ENCODE measurements at regions of chr15 and their contacts with region 1.

Region 1: GRCh38 chr15:65286704-65287519 is at the start of gene PARP16:
- DNase-seq: peak; percentile 95
- ATAC-seq: peak; percentile 98
- H3K4me3 Mint-ChIP-seq: peak within 1 kb of the TSS; percentile 86
- H3K27ac Mint-ChIP-seq: peak within 1 kb of the TSS; percentile 80
- H3K4me1 Mint-ChIP-seq: peaks cover 29% of the 10 kb centered on the region
- H3K27me3 Mint-ChIP-seq: no peaks in the 10 kb centered on the region
- total RNA-seq, gene PARP16: 17.0 to 19.3 TPM

Region 2: DNA sequence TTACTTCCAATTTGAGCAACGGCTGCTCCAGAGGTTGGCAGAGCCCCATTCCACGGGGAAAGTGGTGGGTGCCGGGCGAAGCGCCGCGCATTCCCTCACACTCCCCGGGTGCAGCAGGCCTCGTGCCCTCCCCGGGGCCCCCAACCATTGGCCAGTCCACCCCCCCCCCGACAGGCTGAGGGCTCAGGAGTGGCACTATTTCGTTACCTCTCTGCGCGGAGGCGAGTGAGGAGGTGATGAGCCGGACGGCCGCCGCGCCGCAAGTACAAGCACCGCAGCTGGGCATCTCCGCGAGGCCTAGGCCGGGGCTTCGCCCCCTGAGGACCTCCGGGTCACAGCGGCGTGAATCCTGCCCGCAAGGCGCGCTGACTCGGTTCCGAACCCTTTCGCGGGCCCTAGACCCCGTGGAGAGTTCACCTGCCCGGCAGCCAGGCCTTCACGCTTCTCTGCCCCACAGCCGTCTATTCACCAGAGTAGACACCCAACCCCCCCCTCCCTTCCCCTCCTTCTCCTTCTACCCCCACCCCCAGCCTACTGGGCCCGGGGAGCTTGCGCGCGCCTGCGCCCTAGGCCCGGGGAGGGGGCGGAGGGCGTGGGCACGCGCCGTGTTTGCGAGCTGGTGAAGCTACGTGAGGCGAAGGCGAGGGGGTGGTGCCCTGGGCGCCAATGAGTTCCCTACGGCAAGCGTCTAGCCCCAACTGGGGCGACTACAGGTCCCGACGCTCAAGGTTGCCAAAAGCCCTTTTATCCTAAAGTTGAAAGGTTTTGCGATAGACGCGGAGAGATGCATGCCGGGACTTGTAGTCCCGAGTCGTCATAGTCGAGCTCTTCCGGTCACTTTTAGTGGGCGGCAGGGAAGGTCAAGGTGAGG is 101.8 kb before region 1 on chr15 and contains the start of gene CLPX:
- CTCF ChIA-PET with region 1: interaction called, 8 read pairs
- POLR2A ChIA-PET with region 1: interaction called, 20 read pairs
- DNase-seq: peak; percentile 93
- ATAC-seq: peak; percentile 97
- H3K4me3 Mint-ChIP-seq: peak within 1 kb of the TSS; percentile 97
- H3K27ac Mint-ChIP-seq: peak within 1 kb of the TSS; percentile 90
- H3K4me1 Mint-ChIP-seq: peaks cover 32% of the 10 kb centered on the region
- H3K27me3 Mint-ChIP-seq: no peaks in the 10 kb centered on the region
- total RNA-seq, gene CLPX: 40.5 to 42.9 TPM

Region 3: GRCh38 chr15:65268411-65268810 is 18.5 kb before region 1 on chr15:
- CTCF ChIA-PET with region 1: interaction called, 16 read pairs
- POLR2A ChIA-PET with region 1: interaction called, 9 read pairs
- DNase-seq: no peak
- ATAC-seq: no peak
- H3K4me3 Mint-ChIP-seq: no peak overlapping the region
- H3K27ac Mint-ChIP-seq: no peak overlapping the region
- H3K4me1 Mint-ChIP-seq: no peaks in the 10 kb centered on the region
- H3K27me3 Mint-ChIP-seq: no peaks in the 10 kb centered on the region

Region 4: DNA sequence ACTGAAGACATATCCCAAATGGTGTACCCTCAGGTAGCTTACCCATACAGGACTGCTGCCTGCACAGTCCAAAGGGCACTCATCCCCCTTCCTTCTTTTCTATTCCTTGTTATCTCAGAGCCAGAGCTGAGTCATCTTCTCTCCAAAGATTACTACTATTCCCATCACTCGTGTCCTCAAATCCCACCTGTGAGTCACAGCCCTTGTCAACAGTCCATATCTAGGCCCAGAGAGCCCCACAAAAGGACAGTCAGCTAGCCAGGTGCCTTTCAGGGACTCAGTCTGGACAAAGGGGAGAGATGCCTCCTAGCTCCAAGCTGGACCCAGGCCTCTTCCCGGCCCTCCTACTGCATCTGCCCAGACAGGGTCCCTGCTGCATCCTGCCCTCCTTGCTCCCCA is 11.2 kb before region 1 on chr15:
- CTCF ChIA-PET with region 1: interaction called, 16 read pairs
- POLR2A ChIA-PET with region 1: interaction called, 12 read pairs
- DNase-seq: no peak
- ATAC-seq: peak; percentile 33
- H3K4me3 Mint-ChIP-seq: no peak overlapping the region
- H3K27ac Mint-ChIP-seq: no peak overlapping the region
- H3K4me1 Mint-ChIP-seq: peaks cover 26% of the 10 kb centered on the region
- H3K27me3 Mint-ChIP-seq: no peaks in the 10 kb centered on the region

Region 5: DNA sequence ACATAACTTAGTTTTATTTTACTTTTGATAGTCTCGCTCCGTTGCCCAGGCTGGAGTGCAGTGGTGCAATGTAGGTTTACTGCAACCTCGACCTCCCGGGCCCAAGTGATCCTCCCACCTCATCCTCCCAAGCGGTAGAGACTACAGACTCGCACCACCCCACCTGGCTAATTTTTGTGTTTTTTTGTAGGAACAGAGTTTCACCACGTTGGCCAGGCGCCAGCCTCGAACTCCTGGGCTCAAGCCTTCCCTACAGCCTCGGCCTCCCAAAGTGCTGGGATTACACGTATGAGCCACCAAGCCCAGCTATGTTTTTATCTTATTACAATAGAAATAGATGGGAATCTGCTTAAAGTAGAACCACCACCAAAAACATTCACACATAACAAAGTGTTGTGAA is 11.8 kb after region 1 on chr15:
- CTCF ChIA-PET with region 1: interaction called, 29 read pairs
- POLR2A ChIA-PET with region 1: interaction called, 115 read pairs
- DNase-seq: no peak
- ATAC-seq: no peak
- H3K4me3 Mint-ChIP-seq: peak overlapping the region; percentile 79
- H3K27ac Mint-ChIP-seq: peak overlapping the region; percentile 88
- H3K4me1 Mint-ChIP-seq: peaks cover 56% of the 10 kb centered on the region
- H3K27me3 Mint-ChIP-seq: no peaks in the 10 kb centered on the region